ENCODE measurements at regions of chr10 and their contacts with region 1.

Region 1: DNA sequence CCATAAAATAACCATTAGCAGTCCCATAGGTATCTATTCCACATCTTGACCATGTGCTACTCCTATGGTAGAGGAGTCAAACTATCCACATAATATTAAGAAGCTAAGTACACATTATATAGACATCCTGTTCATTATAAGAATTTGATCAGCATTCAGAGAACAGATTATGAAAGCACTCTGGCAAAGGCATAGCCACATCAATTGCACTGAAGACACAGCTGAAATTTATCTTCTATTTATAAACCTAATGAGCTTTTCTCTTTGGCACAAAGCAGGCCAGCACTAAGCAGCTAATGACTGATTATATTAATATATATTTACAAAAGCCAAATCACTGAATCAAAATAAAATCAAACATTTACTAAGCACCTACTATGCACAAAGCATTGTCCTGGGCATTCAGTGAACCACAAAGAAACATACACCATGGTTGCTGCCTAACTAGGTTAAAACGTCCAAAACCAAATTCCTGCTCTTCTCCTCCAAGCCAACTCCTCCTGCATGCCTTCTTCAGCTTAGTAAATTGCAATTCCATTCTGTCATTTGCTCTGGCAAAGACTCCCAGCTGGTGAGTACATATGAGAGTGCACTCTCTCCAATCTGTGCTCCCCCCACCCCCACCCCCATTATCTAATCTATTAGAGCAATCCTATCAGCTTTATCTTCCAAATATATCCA is 122.6 kb upstream of the ASAH2 start:
- DNase-seq: no peak
- ATAC-seq: peak; percentile 81

Region 2: GRCh38 chr10:50417886-50418830 is 44.2 kb after region 1 on chr10:
- intact Hi-C with region 1: loop called (anchors 5 kb)
- DNase-seq: peak; percentile 88
- ATAC-seq: peak; percentile 92

Region 3: GRCh38 chr10:50540069-50540825 is 166.3 kb after region 1 on chr10:
- intact Hi-C with region 1: no loop called
- DNase-seq: no peak
- ATAC-seq: peak; percentile 31